ENCODE measurements at regions of chr11 and their contacts with region 1.

Region 1: DNA sequence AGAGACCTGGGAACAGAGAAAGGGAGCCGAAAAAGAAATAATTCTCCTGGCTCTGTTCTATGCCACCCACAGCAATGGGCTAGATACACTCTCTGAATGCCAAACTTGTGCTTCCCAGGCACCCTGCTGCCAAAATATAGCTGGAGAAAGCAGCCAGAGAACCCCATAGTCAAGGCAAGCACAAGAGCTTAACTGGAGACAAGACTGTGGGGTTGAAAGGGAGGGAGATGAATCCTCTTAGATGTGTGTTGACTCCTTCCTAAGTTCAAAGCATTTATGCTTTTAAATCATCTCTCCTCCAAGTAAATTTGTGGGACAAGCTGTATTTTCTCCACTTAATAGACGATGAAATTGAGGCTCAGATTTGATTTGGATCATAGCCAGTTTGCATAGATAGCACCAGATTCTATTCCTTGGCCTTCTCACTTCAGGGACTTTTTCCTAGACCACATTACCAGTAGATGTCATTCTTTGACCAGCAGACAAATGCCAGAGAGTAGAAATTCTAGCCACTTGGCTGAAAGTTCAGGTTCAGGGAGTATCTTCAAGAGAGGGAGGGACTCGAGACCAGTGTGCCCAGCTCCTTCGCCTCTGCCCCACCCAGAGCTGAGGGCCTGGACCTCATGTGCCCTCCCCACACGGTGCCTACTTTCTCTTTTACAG is 16.5 kb upstream of the ETS1 start:
- DNase-seq: peak; percentile 55
- H3K4me3 Mint-ChIP-seq: no peak overlapping the region
- H3K27ac Mint-ChIP-seq: no peak overlapping the region
- H3K4me1 Mint-ChIP-seq: peaks cover 14% of the 10 kb centered on the region
- H3K27me3 Mint-ChIP-seq: no peaks in the 10 kb centered on the region

Region 2: GRCh38 chr11:128588093-128588492 is 15.8 kb before region 1 on chr11:
- intact Hi-C with region 1: loop called (anchors 2 kb)
- DNase-seq: no peak
- H3K4me3 Mint-ChIP-seq: no peak overlapping the region
- H3K27ac Mint-ChIP-seq: no peak overlapping the region
- H3K4me1 Mint-ChIP-seq: peaks cover 4% of the 10 kb centered on the region
- H3K27me3 Mint-ChIP-seq: peaks cover 29% of the 10 kb centered on the region

Measured in activated CD4-positive, alpha-beta T cell treated with anti-CD3 and anti-CD28 coated beads, Interleukin-2, amount 10 ng/mL, durations not matched to agents 24 days and 14 days (primary cell).